ENCODE measurements at regions of chr11 and their contacts with region 1.

Region 1: GRCh38 chr11:76207642-76208401 is 1.5 kb upstream of the WNT11 start:
- DNase-seq: peak; percentile 56 to 91 (median 74)
- ATAC-seq: peak; percentile 78
- H3K4me3 ChIP-seq: peak overlapping the region; percentile 65
- H3K4me3 Mint-ChIP-seq: peak overlapping the region; percentile 86
- H3K27ac ChIP-seq: no peak overlapping the region
- H3K27ac Mint-ChIP-seq: no peak overlapping the region
- H3K4me1 ChIP-seq: peaks cover 56% of the 10 kb centered on the region
- H3K4me1 Mint-ChIP-seq: peaks cover 21% of the 10 kb centered on the region
- H3K27me3 ChIP-seq: peaks cover 51 to 77% of the 10 kb centered on the region in 2 experiments
- H3K27me3 Mint-ChIP-seq: peaks cover 59% of the 10 kb centered on the region
- CTCF ChIP-seq: peak; percentile 96

Region 2: GRCh38 chr11:76173663-76174062 is 34.2 kb before region 1 on chr11:
- CTCF ChIA-PET with region 1: no interaction called
- POLR2A ChIA-PET with region 1: no interaction called
- intact Hi-C with region 1: no loop called
- DNase-seq: no peak
- ATAC-seq: no peak
- H3K4me3 ChIP-seq: no peak overlapping the region
- H3K4me3 Mint-ChIP-seq: no peak overlapping the region
- H3K27ac ChIP-seq: no peak overlapping the region
- H3K27ac Mint-ChIP-seq: no peak overlapping the region
- H3K4me1 ChIP-seq: no peaks in the 10 kb centered on the region
- H3K4me1 Mint-ChIP-seq: no peaks in the 10 kb centered on the region
- H3K27me3 ChIP-seq: no peaks in the 10 kb centered on the region
- H3K27me3 Mint-ChIP-seq: no peaks in the 10 kb centered on the region
- CTCF ChIP-seq: no peak

Region 3: GRCh38 chr11:76235233-76236091 is 27.6 kb after region 1 on chr11:
- CTCF ChIA-PET with region 1: interaction called, 50 read pairs
- POLR2A ChIA-PET with region 1: interaction called, 52 read pairs
- intact Hi-C with region 1: loop called (anchors 1 kb)
- DNase-seq: peak; percentile 82 to 96 (median 90)
- ATAC-seq: peak; percentile 77
- H3K4me3 ChIP-seq: peak overlapping the region; percentile 84
- H3K4me3 Mint-ChIP-seq: peak overlapping the region; percentile 100
- H3K27ac ChIP-seq: peak overlapping the region; percentile 10 to 37
- H3K27ac Mint-ChIP-seq: peak overlapping the region; percentile 99
- H3K4me1 ChIP-seq: peaks cover 58% of the 10 kb centered on the region
- H3K4me1 Mint-ChIP-seq: peaks cover 54% of the 10 kb centered on the region
- H3K27me3 ChIP-seq: no peaks in the 10 kb centered on the region
- H3K27me3 Mint-ChIP-seq: peaks cover 18% of the 10 kb centered on the region
- CTCF ChIP-seq: no peak

Region 4: DNA sequence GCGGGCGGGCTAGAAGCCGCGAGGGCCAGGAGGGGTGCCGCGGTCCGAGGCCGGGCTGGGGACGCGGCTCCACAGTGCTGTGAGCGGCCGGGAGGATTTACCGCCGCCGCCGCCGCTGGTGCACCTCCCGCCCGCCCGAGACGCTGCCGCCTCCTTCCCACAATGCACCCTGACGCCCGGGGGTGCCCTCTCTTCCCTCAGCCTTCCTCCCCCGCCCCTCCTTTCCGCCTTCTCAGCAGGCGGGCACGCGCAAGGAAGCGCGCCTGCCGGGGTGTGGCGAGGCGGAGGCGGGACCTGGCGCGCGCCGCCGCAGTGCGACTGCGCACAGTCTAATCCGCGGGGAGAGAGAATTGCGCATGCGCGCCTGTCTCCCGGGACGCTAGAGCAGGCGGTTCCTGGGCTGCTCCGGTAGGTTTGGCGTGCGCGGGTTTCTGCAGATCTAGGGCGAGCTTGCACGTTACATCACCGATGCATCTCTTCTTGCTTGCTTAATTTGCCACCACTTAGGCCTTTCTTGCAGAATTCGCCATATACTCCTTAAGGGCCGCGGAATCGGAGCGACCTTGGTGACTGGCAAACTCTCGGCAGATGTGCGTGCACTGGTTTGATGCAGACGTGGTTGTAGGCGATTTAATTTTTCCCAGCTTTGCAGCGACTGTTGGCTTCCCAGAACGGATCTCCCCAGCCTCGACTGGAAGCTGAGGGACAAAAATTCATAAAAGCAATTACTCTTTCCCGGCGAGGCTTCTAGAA is 173.3 kb after region 1 on chr11 and contains the starts of genes GVQW3 and THAP12:
- CTCF ChIA-PET with region 1: interaction called, 4 read pairs
- POLR2A ChIA-PET with region 1: no interaction called
- intact Hi-C with region 1: loop called in 1 of 2 experiments (anchors 5 kb)
- DNase-seq: peak; percentile 93 to 99 (median 97)
- ATAC-seq: peak; percentile 89
- H3K4me3 ChIP-seq: peak within 1 kb of the TSS; percentile 78
- H3K4me3 Mint-ChIP-seq: peak within 1 kb of the TSS; percentile 97
- H3K27ac ChIP-seq: peak within 1 kb of the TSS; percentile 11 to 24
- H3K27ac Mint-ChIP-seq: peak within 1 kb of the TSS; percentile 87
- H3K4me1 ChIP-seq: peaks cover 45% of the 10 kb centered on the region
- H3K4me1 Mint-ChIP-seq: peaks cover 76% of the 10 kb centered on the region
- H3K27me3 ChIP-seq: no peaks in the 10 kb centered on the region
- H3K27me3 Mint-ChIP-seq: no peaks in the 10 kb centered on the region
- CTCF ChIP-seq: no peak
- total RNA-seq, gene GVQW3: 1.8 TPM
- total RNA-seq, gene THAP12: 34.8 to 36.3 TPM

Region 5: GRCh38 chr11:76512851-76513653 is 305.2 kb after region 1 on chr11:
- CTCF ChIA-PET with region 1: no interaction called
- POLR2A ChIA-PET with region 1: no interaction called
- intact Hi-C with region 1: loop called (anchors 5 kb)
- DNase-seq: peak in 3 of 14 experiments; percentile 11 to 27 (median 14)
- ATAC-seq: no peak
- H3K4me3 ChIP-seq: no peak overlapping the region
- H3K4me3 Mint-ChIP-seq: no peak overlapping the region
- H3K27ac ChIP-seq: no peak overlapping the region
- H3K27ac Mint-ChIP-seq: no peak overlapping the region
- H3K4me1 ChIP-seq: no peaks in the 10 kb centered on the region
- H3K4me1 Mint-ChIP-seq: no peaks in the 10 kb centered on the region
- H3K27me3 ChIP-seq: no peaks in the 10 kb centered on the region
- H3K27me3 Mint-ChIP-seq: no peaks in the 10 kb centered on the region
- CTCF ChIP-seq: no peak

Measured in CD4-positive, alpha-beta T cell (primary cell).